ENCODE measurements at regions of chr5 and their contacts with region 1.

Region 1: DNA sequence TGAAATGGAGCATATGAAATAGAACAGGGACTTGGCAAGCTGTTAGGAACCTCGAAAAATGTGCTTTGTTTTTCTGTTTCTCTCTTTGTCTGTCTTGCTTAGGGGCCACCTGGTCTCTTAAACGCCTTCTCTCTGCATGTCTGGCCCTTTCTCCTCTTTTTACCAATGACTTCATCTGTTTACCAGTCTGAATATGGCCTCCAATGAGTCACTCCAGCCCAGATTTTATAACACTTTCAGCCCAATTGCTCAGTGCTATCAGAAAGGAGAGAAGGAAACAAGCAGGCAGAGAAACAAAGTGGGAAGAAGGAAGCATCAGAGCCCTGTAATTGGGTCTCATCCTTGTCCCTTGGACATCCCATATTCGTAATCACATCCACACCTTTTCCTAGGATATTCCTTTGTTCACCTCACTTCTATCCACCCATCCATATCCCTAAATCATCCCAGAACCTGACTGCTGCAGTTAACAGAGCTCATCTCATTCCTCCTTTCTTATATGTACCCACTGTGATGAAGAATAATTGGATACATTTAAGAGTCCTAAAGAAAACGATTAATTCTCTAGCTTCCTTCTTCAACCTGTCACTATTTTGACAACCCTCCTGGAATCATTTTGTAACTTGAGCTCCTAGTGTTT is 151.8 kb upstream of the GPR151 start:
- DNase-seq: no peak
- H3K4me3 ChIP-seq: no peak overlapping the region
- H3K27ac ChIP-seq: peak overlapping the region; percentile 79 to 82
- H3K4me1 ChIP-seq: peaks cover 0 to 8% of the 10 kb centered on the region in 2 donors
- H3K27me3 ChIP-seq: no peaks in the 10 kb centered on the region
- CTCF ChIP-seq: no peak

Region 2: GRCh38 chr5:146731909-146732659 is 64.3 kb after region 1 on chr5:
- intact Hi-C with region 1: loop called (anchors 5 kb)
- DNase-seq: no peak
- H3K4me3 ChIP-seq: no peak overlapping the region
- H3K27ac ChIP-seq: peak overlapping the region; percentile 26 to 53
- H3K4me1 ChIP-seq: peaks cover 7 to 10% of the 10 kb centered on the region in 2 donors
- H3K27me3 ChIP-seq: no peaks in the 10 kb centered on the region
- CTCF ChIP-seq: no peak

Measured in ascending aorta (tissue), 2 donors.